ENCODE measurements at regions of chr1 and their contacts with region 1.

Region 1: DNA sequence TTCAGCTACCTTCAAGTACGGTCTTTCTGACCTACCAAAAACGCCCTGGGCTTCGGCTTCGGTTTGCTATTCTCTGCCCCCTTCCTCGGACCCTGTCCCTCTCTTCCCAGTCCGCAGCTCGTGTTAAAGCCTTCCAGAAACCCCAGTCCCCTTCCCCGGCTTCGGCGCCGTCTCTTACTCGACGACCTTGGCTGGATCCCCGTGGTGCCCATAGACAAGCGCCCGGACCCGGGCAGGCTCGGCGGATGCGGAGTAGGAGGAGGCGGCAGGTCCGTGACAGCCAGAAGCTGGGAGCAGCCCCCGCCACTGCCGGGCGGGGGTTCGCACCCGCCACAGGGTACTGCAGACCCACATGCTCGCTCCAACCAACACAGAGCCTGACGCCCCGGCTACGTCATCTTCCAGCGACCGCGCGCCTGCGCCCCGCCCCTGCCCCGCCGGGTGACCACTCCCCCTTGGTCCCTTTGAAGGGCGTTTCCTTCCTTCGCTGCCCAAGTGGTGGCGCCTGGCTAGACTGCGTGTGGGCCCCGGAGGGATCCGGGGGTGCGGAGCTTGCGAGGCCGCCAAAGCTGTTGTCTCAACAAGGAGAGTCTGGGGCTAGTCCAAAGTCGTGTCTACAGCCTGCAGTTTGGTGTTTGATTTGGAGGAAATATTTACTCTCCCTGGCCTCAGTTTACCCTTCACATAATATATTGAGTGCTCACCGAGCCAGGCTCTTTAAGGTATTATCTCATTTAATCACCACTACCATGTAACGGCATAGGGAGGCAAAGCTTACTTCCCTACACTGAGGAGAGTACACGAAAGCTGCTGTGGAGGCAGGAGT is at the start of gene MECR:
- DNase-seq: peak; percentile 92 to 97 (median 95)
- ATAC-seq: peak; percentile 93 to 99 (median 98)
- H3K4me3 ChIP-seq: peak within 1 kb of the TSS; percentile 44 to 93 (median 73)
- H3K27ac ChIP-seq: peak within 1 kb of the TSS in 11 of 12 donors; percentile 35 to 74 (median 66)
- H3K4me1 ChIP-seq: peaks cover 0 to 20% (median 13%) of the 10 kb centered on the region in 12 donors
- H3K27me3 ChIP-seq: peaks cover 0 to 3% (median 0%) of the 10 kb centered on the region in 9 donors
- CTCF ChIP-seq: peak in 6 of 12 donors; percentile 11 to 39 (median 26)
- POLR2A ChIP-seq: peak in 1 of 2 donors; percentile 55
- total RNA-seq, gene MECR: 19.6 to 37.4 (median 33.1) TPM

Region 2: DNA sequence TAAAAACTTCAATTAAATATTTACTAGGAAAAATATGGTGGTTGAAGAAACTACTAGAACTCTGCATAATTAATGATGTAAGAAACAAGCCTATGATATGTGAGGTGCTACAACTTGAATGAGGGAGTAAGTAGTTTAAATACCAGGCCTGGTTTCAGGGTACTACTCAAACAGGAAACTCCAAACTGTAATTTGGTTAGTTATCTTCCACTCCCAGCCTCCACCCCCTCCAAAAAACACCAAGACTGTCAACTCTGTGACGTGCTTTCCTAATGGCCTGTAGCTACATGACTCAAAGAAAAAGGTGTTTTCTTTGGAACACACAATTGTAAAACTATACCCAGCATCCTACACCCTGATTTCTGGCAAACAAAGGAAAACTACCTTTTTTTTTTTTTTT is 780.9 kb before region 1 on chr1:
- intact Hi-C with region 1: no loop called
- DNase-seq: no peak
- ATAC-seq: peak in 1 of 4 donors; percentile 74
- H3K4me3 ChIP-seq: no peak overlapping the region
- H3K27ac ChIP-seq: peak overlapping the region in 4 of 12 donors; percentile 5 to 32 (median 23)
- H3K4me1 ChIP-seq: peaks cover 0 to 20% (median 6%) of the 10 kb centered on the region in 12 donors
- H3K27me3 ChIP-seq: no peaks in the 10 kb centered on the region
- CTCF ChIP-seq: no peak
- POLR2A ChIP-seq: no peak

Region 3: DNA sequence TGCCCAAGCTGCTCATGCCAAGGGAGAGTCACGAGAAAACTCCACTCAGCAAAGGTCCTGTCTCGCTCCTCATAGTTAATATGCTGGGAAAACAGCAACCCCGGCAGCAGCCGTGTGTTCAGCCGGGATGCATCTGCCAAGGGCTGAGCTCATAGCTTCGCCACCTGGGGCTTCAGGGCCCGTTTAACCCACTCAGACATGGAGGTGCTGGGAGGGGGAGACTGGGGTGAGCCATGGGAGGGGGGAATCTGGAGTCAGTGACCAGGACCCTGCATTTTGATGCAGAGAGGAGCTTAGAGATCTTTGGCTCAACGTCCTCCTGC is 289.0 kb after region 1 on chr1:
- intact Hi-C with region 1: no loop called
- DNase-seq: no peak
- ATAC-seq: no peak
- H3K4me3 ChIP-seq: no peak overlapping the region
- H3K27ac ChIP-seq: no peak overlapping the region
- H3K4me1 ChIP-seq: no peaks in the 10 kb centered on the region
- H3K27me3 ChIP-seq: peaks cover 0 to 48% (median 10%) of the 10 kb centered on the region in 9 donors
- CTCF ChIP-seq: no peak
- POLR2A ChIP-seq: no peak

Region 4: DNA sequence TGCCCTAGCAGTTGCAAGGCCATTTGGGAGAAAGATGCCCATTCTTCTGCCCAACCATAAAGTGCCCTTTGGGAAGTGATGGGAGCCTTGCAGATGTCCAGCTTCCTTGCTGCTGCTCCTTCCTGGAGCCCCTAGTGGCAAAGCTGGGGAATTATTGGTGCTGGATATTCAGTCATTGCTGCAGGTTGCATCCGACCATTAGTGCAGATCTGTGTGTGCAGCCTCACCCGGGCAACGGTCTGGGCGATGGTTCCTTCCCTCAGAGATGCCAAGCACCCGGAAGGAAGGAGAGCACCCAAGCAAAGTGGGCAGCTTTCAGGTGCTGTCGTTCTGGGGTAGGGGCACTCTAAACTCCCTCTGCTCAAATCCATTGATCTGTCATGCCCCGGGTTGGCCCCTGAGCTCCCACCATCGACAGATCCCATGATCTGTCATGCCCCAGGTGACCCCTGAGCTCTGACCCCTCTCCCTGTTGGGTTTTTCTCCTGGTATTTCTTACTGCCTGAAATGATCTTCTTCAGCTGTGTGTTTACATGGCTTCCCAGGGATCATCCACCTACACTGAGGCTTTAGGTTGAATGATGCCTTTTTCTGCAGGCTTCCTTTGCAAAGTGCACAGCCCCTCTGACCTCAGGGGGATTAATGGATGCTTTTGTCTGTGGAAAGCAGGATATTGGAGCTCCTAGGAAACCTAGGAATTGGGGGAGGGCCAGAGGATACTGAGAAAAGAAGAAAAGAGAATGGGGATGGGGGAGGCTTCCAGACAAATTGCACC is 473.0 kb after region 1 on chr1:
- intact Hi-C with region 1: loop called in 1 of 10 experiments (anchors 10 kb)
- DNase-seq: no peak
- ATAC-seq: peak in 2 of 4 donors; percentile 30 to 34
- H3K4me3 ChIP-seq: no peak overlapping the region
- H3K27ac ChIP-seq: no peak overlapping the region
- H3K4me1 ChIP-seq: peaks cover 0 to 9% (median 0%) of the 10 kb centered on the region in 12 donors
- H3K27me3 ChIP-seq: peaks cover 0 to 32% (median 25%) of the 10 kb centered on the region in 9 donors
- CTCF ChIP-seq: peak; percentile 34 to 65 (median 54)
- POLR2A ChIP-seq: no peak

Region 5: DNA sequence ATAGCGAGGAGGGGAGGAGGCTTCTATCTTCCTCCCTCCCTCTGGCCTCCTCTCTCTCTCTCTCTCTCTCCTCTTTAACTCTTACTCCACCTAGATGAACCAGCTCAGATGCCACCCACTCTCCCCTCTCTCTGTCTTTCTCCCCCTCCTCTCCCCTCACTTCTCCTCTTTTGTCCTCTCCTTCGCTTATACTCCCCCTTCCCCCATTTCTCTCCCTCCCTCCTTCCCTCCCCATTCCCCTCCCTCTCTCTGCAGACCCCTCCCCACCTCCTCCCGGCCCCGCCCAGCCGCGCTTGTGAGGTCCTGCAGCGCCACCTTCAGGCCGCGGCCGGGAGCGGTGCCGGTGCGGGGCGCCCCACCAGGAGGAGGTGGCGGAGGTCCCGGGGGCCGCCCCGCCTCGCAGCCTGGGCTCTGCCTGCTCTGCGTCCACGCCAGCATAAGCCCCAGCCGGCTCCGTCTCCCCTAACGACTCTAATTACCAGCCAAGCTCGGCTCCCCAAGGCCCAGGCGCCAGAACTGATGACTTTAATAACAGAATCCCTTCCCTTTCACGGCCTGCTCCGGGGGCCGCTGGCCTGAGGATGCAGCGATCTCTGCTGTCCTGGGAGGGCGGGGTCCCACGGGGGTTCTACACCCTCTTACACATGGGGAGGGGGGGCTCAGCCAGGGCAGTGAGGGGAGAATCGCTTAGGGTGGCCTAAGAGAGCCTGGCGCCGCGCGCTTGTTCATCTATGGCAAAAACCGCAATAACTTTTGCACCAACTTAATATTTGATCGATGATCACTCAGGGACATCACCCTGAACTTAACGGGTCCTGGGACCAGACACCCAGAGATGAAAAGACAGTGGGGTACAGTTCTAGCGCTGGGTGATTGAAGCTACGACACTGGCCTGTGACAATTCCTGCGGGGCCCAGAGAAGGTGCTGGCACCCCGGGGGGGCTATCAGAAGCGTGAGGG is 855.3 kb after region 1 on chr1:
- intact Hi-C with region 1: loop called in 2 of 10 experiments (anchors 10 kb)
- DNase-seq: peak in 4 of 5 donors; percentile 47 to 80 (median 56)
- ATAC-seq: peak in 3 of 4 donors; percentile 27 to 59 (median 47)
- H3K4me3 ChIP-seq: peak overlapping the region in 4 of 12 donors; percentile 5 to 39 (median 29)
- H3K27ac ChIP-seq: peak overlapping the region in 1 of 12 donors; percentile 4
- H3K4me1 ChIP-seq: peaks cover 4 to 42% (median 24%) of the 10 kb centered on the region in 12 donors
- H3K27me3 ChIP-seq: peaks cover 0 to 18% (median 0%) of the 10 kb centered on the region in 9 donors
- CTCF ChIP-seq: peak; percentile 31 to 76 (median 61)
- POLR2A ChIP-seq: no peak

Region 6: GRCh38 chr1:30379684-30380624 is 1149.2 kb after region 1 on chr1:
- intact Hi-C with region 1: loop called in 4 of 10 experiments (anchors 5 kb)
- DNase-seq: peak in 3 of 5 donors; percentile 43 to 47 (median 43)
- ATAC-seq: peak; percentile 32 to 82 (median 76)
- H3K4me3 ChIP-seq: no peak overlapping the region
- H3K27ac ChIP-seq: no peak overlapping the region
- H3K4me1 ChIP-seq: peaks cover 0 to 6% (median 0%) of the 10 kb centered on the region in 12 donors
- H3K27me3 ChIP-seq: peaks cover 0 to 30% (median 4%) of the 10 kb centered on the region in 9 donors
- CTCF ChIP-seq: peak; percentile 72 to 94 (median 86)
- POLR2A ChIP-seq: no peak